Right cardiac atrium (tissue), 5 donors: ENCODE measurements at regions of chr1 and their contacts with region 1.

Region 1: DNA sequence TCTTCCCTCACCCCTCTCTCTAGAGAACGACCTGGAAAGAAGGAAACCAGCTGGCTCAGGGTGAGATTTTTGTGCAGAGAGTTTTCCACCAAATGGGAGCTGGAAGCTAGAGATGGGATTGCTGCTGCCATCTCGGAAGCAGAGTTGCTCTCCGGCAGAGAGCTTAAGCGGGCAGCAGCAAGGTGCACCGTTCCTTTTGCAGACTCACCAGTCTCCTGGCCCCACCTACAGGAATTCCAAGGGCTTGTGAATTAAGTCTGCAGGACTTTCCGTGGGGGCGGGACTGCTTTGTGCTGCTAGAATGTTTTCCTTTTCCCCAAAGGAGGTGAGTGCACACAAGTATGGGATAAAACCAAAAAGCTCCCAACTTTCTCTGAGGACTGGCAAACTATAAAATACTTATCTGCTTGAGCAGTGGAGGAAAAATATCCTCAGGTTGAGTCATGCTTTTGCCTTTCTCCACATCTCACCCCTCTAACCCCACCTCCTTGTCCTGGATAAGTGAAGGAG is 29.1 kb upstream of the KIAA0040 start:
- DNase-seq: peak in 2 of 3 donors; percentile 58 to 70
- ATAC-seq: peak; percentile 55 to 66
- H3K4me3 ChIP-seq: no peak overlapping the region
- H3K27ac ChIP-seq: no peak overlapping the region
- H3K4me1 ChIP-seq: peaks cover 6% of the 10 kb centered on the region
- H3K27me3 ChIP-seq: no peaks in the 10 kb centered on the region

Region 2: DNA sequence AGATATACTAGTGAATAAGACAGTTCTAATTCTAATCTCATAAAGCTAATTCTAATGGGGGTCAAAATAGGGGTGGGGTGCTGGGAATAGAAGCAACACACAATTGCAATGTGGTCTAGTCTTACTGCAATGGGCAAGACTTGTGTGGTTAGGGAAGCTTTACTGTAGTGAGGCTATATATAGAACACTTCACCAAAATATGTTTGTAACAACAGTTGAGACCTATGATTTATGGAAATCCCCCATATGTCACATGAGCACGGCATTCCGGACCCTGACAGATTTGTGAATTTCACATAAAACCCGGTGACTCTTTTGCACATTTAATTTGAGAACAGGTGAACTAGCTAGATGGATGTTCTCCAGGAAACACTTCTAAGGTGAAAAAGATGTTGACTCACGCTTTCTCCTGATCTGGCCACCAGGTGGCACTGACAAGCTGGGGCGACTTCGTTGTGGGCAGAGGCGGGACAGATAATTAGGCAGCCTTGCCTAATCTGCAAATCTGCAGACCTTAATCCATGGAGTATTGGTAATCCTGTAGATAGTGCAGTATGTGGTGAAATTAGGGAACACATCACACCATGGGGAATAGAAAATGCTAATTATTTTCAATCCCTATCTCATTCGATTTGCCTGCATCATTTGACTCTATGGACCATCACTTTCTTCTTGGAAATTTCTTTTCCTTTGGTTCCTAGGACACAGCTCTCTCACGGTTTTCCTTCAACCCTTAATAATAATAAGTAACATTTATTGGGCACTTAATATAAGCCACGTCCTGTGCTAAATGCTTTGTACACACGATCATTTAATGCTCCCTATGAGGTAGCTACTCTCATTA is 66.9 kb before region 1 on chr1:
- intact Hi-C with region 1: loop called in 3 of 4 experiments (anchors 5 to 10 kb)
- DNase-seq: peak; percentile 67 to 88 (median 82)
- ATAC-seq: peak; percentile 46 to 65
- H3K4me3 ChIP-seq: no peak overlapping the region
- H3K27ac ChIP-seq: no peak overlapping the region
- H3K4me1 ChIP-seq: no peaks in the 10 kb centered on the region
- H3K27me3 ChIP-seq: no peaks in the 10 kb centered on the region

Region 3: GRCh38 chr1:175169305-175170018 is 52.3 kb before region 1 on chr1:
- intact Hi-C with region 1: loop called in 1 of 4 experiments (anchors 10 kb)
- DNase-seq: no peak
- ATAC-seq: peak; percentile 12 to 79
- H3K4me3 ChIP-seq: no peak overlapping the region
- H3K27ac ChIP-seq: no peak overlapping the region
- H3K4me1 ChIP-seq: peaks cover 3% of the 10 kb centered on the region
- H3K27me3 ChIP-seq: no peaks in the 10 kb centered on the region

Region 4: GRCh38 chr1:175297291-175297690 is 75.6 kb after region 1 on chr1:
- intact Hi-C with region 1: no loop called
- DNase-seq: no peak
- ATAC-seq: no peak
- H3K4me3 ChIP-seq: no peak overlapping the region
- H3K27ac ChIP-seq: no peak overlapping the region
- H3K4me1 ChIP-seq: no peaks in the 10 kb centered on the region
- H3K27me3 ChIP-seq: no peaks in the 10 kb centered on the region